Stomach (tissue), 19 donors: ENCODE measurements at regions of chr13 and their contacts with region 1.

Region 1: GRCh38 chr13:99436686-99437416 is 64.4 kb upstream of the TM9SF2 start:
- DNase-seq: peak; percentile 91 to 94
- H3K4me3 ChIP-seq: peak overlapping the region in 1 of 4 donors; percentile 18
- H3K27ac ChIP-seq: no peak overlapping the region
- H3K4me1 ChIP-seq: peaks cover 9 to 44% (median 17%) of the 10 kb centered on the region in 4 donors
- H3K27me3 ChIP-seq: peaks cover 0 to 22% (median 0%) of the 10 kb centered on the region in 3 donors
- CTCF ChIP-seq: peak in 6 of 7 experiments; percentile 4 to 100 (median 99)
- EP300 ChIP-seq: no peak
- POLR2A ChIP-seq: no peak

Region 2: DNA sequence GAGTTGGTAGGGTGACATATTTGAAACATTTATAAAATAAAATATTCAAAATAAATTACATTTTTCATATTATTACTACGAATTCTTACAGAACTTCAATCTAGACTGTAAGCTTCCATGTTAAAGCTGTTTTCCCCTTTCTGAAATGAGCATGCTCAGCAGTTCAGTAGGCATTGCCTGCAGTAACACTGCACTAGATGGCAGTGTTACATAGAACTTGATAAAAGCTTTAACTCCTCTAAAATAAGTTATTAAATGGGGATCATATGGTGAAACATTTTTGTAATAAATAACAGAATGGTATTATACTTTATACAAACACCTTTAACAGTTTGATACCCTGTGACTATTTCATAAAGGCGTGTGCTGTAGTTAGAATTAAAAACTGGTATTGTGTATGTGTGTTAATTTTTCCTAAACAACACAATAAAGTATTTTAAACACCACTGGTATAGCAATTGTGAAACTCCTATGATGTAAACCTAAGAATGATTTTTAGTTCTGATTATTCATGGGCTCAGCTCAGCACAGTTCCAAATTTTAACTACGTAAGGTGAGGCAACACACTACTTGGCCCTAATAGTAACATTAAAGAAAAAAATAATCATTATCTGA is 167.1 kb before region 1 on chr13:
- intact Hi-C with region 1: loop called (anchors 10 kb)
- DNase-seq: peak in 1 of 2 donors; percentile 83
- H3K4me3 ChIP-seq: no peak overlapping the region
- H3K27ac ChIP-seq: peak overlapping the region in 1 of 5 donors; percentile 27
- H3K4me1 ChIP-seq: peaks cover 0 to 13% (median 0%) of the 10 kb centered on the region in 4 donors
- H3K27me3 ChIP-seq: no peaks in the 10 kb centered on the region
- CTCF ChIP-seq: peak in 5 of 7 experiments; percentile 46 to 61 (median 52)
- EP300 ChIP-seq: no peak
- POLR2A ChIP-seq: no peak